Uterus (tissue), 4 donors: ENCODE measurements at regions of chr20 and their contacts with region 1.

Region 1: DNA sequence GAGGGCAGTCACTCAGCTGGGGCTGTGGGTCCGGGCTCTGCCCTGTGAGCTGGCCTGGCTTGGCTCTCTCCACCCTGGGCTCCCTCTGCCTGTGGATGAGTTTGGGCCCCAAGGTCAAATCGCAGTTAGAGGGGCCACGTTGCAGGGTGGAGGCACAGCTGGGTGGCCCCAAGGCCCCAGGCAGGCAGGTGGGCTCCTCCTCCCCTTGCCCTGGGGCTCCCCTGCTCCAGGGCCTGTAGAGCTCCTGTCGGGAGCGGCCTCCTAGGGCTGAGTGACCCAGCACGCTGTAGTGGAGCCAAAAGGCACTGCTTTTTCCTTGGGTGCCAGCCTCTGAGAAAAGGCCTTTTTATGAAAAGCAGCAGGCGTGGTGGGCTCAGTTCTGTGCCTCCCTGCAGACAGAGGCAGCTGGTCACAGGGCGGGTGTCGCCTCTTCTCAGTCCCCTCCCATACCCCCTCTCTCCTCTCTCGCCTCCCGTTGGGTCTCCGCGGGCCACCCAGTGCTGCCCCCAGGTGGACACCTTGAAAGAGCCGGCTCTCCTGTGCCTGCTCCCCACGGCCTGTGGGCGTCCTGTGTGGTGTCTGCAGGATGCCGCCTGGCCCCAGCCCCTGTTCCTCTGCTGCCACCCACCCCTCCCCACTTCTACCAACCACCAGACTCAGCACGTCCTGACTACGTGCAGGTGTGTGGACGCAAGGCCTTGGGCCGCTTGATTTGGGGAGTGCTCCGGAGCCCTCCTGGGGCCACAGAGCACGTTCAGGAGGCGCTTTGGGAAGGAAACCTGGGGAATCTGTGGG is 13.2 kb downstream of the SS18L1 start:
- DNase-seq: peak; percentile 48 to 64
- H3K4me3 ChIP-seq: no peak overlapping the region
- H3K27ac ChIP-seq: no peak overlapping the region
- H3K4me1 ChIP-seq: peaks cover 0 to 7% of the 10 kb centered on the region in 2 donors
- H3K27me3 ChIP-seq: no peaks in the 10 kb centered on the region
- CTCF ChIP-seq: peak; percentile 35 to 66 (median 48)
- POLR2A ChIP-seq: no peak

Region 2: GRCh38 chr20:62010551-62011402 is 146.0 kb before region 1 on chr20:
- intact Hi-C with region 1: loop called (anchors 10 kb)
- DNase-seq: peak; percentile 53 to 55
- H3K4me3 ChIP-seq: no peak overlapping the region
- H3K27ac ChIP-seq: no peak overlapping the region
- H3K4me1 ChIP-seq: peaks cover 0 to 8% of the 10 kb centered on the region in 2 donors
- H3K27me3 ChIP-seq: no peaks in the 10 kb centered on the region
- CTCF ChIP-seq: peak; percentile 58 to 80 (median 74)
- POLR2A ChIP-seq: no peak